Right cardiac atrium (tissue), 5 donors: ENCODE measurements at regions of chr7 and their contacts with region 1.

Region 1: DNA sequence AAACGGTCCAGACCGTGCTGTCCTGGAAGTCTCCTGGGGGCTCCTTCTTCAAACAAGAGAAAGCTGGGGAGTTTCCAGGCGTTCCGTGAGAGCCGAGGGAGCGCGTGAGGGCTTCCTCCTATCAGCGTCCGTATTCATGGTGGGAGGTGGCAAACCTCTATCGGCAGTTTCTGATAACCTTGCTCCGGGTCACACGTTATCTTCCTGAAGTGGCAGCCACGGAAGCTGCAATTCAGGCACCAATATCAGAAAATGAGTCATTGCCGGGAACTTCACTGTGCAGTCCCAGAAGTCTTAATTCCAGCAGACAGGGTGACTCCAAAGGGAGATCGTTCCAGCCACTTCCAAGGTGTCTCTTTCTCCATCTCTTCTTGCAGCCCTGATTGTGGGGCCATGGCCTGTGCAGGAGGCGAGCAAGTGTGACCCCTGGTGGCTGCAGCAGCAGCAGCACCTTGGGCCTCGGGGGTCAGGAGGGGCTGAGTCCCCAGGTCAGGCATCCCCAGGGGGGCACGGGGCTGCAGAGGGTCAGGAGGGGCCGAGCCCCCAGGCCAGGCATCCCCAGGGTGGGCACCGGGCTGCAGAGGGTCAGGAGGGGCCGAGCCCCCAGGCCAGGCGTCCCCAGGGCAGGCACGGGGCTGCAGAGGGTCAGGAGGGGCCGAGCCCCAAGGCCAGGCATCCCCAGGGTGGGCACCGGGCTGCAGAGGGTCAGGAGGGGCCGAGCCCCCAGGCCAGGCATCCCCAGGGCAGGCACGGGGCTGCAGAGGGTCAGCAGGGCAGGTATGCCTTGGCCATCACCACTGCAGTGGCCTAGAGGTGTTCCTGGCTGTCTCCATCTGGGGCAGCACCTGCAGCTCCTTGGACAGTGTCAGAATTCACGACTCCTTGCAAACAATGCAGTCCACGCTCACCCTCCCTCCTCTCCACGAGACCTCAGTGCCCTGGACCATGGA is 538.7 kb downstream of the DNAJB6 start:
- DNase-seq: peak; percentile 38 to 67 (median 66)
- ATAC-seq: peak; percentile 63 to 85
- H3K4me3 ChIP-seq: no peak overlapping the region
- H3K27ac ChIP-seq: no peak overlapping the region
- H3K4me1 ChIP-seq: no peaks in the 10 kb centered on the region
- H3K27me3 ChIP-seq: no peaks in the 10 kb centered on the region

Region 2: DNA sequence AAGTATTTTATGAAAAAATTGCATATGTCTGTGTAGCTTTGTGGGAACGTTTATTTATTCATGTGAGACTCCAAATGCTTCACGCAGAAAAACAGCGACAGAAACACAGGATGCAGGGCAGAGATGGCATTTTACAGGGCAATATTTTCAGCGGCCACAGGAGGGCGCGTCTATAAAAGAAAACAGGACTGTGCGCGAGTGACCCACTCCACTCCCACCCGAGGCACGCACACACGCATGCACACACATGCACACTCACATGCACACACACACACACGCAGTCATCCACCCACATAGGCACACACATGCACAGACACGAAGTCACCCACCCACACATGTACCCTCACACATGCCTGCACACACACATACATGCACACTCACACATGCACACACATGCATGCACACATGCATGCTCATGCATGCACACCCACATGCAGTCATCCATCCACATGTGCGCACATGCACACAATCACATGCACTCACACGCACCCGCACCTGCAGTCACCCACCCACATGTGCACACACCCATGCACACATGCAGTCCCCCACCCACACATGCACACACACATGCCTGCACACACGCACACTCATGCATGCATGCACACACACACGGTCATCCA is 442.4 kb before region 1 on chr7:
- intact Hi-C with region 1: loop called in 3 of 4 experiments (anchors 5 to 10 kb)
- DNase-seq: peak in 1 of 3 donors; percentile 76
- ATAC-seq: peak in 1 of 2 donors; percentile 54
- H3K4me3 ChIP-seq: no peak overlapping the region
- H3K27ac ChIP-seq: no peak overlapping the region
- H3K4me1 ChIP-seq: no peaks in the 10 kb centered on the region
- H3K27me3 ChIP-seq: no peaks in the 10 kb centered on the region

Region 3: GRCh38 chr7:157662981-157663716 is 212.4 kb before region 1 on chr7:
- intact Hi-C with region 1: no loop called
- DNase-seq: peak in 1 of 3 donors; percentile 72
- ATAC-seq: peak in 1 of 2 donors; percentile 50
- H3K4me3 ChIP-seq: no peak overlapping the region
- H3K27ac ChIP-seq: no peak overlapping the region
- H3K4me1 ChIP-seq: no peaks in the 10 kb centered on the region
- H3K27me3 ChIP-seq: no peaks in the 10 kb centered on the region

Region 4: GRCh38 chr7:157983502-157984422 is 108.3 kb after region 1 on chr7:
- intact Hi-C with region 1: no loop called
- DNase-seq: no peak
- ATAC-seq: no peak
- H3K4me3 ChIP-seq: no peak overlapping the region
- H3K27ac ChIP-seq: no peak overlapping the region
- H3K4me1 ChIP-seq: no peaks in the 10 kb centered on the region
- H3K27me3 ChIP-seq: no peaks in the 10 kb centered on the region